MCF 10A (cell line): ENCODE measurements at regions of chr1 and their contacts with region 1.

Region 1: DNA sequence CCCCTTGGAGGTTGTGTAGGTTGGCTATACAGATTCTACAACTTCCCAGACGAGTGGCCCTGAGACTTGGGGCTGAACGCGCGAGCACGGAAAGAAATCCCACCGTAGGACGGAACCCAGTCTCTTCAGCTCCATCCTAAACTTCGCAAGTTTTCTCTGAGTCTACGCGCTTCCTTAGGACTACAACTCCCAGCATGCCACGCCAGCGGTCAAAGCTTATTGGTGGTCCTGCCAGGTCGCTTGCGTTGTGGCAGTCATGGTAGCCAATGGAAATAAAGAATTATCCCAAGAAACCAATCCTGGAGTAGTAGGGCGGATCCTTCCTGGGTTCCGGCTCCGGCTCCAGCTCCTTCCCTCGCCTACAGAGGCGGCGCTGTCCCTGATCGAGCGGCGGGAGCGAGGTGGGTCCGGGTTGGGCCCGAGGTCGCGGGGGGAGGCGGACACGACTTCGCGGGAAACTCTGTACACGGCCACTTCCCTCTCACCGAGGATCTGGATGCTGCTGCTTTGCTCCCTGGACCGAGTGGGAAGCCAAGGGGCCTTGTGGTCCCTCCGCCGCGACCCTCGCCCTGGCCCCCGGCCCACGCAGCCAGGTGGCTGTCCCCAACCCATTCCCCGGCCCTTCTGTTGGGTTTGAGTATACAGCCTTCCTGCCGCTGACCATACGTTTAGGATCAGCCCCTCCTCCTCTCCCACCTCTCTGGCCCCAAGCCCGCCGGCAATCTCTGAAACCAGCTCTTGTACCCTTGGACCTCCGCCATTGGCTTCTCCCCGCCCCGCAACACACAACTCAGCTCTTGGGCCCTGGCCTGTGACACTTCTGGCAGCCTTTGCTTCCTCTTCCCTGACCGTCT is at the start of gene ZNF691:
- DNase-seq: peak; percentile 97
- H3K4me3 Mint-ChIP-seq: peak within 1 kb of the TSS; percentile 98
- H3K27ac Mint-ChIP-seq: peak within 1 kb of the TSS; percentile 98
- H3K4me1 Mint-ChIP-seq: peaks cover 28% of the 10 kb centered on the region
- H3K27me3 Mint-ChIP-seq: no peaks in the 10 kb centered on the region
- CTCF ChIP-seq: peak; percentile 27
- total RNA-seq, gene ZNF691: 8.4 and 9.5 TPM in 2 replicates

Region 2: GRCh38 chr1:42703888-42704464 is 142.5 kb before region 1 on chr1:
- CTCF ChIA-PET with region 1: no interaction called
- POLR2A ChIA-PET with region 1: no interaction called
- intact Hi-C with region 1: no loop called
- DNase-seq: no peak
- H3K4me3 Mint-ChIP-seq: no peak overlapping the region
- H3K27ac Mint-ChIP-seq: no peak overlapping the region
- H3K4me1 Mint-ChIP-seq: peaks cover 11% of the 10 kb centered on the region
- H3K27me3 Mint-ChIP-seq: no peaks in the 10 kb centered on the region
- CTCF ChIP-seq: no peak

Region 3: DNA sequence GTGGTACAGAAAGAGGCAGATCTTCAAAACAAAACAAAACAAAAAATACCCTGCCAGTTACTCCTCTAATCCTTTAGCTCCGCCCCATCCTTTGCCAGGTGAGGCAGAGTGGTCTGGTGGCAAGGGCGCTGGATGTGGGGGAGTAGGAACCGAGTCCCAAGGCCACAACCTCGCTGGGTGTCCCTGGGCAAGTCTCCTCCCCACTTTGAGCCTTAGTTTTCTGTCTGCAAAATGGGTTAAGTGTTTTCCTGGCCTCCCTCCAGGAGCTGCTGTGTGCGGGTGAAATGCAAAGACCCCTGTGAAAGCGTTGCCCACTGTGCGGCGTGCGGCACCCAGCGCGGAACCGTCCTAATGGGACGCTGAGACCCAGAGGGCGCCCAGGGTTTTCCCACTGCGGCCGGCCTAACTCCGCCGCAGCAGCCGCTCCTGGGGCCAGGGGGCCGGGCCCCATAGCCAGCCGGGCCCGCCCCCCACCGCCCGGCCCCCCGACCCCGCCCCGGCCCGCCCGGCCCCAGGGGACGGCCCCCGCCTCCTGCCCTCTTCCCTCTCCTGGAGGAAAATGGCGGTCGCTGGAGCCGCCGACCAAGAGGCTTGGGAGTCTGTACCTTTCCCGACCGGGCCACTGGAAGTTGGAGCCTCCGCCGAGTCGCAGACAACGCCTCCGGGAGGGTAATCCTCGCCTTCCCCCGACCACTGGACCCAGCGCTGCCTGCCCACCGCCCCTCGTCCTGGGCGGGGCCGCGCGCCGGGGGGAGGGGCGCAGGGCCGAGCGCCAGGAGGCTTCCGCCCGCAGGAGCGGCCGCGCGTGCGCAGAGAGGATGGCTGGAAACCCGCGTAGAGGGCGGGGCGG is 29.7 kb before region 1 on chr1 and contains the starts of genes ERMAP and SVBP:
- CTCF ChIA-PET with region 1: interaction called, 6 read pairs
- POLR2A ChIA-PET with region 1: interaction called, 88 read pairs
- intact Hi-C with region 1: no loop called
- DNase-seq: peak; percentile 84
- H3K4me3 Mint-ChIP-seq: peak within 1 kb of the TSS; percentile 71
- H3K27ac Mint-ChIP-seq: peak within 1 kb of the TSS; percentile 74
- H3K4me1 Mint-ChIP-seq: peaks cover 21% of the 10 kb centered on the region
- H3K27me3 Mint-ChIP-seq: no peaks in the 10 kb centered on the region
- CTCF ChIP-seq: no peak
- total RNA-seq, gene ERMAP: 13.2 and 17.2 TPM in 2 replicates
- total RNA-seq, gene SVBP: 15.7 and 16.7 TPM in 2 replicates

Region 4: GRCh38 chr1:42833981-42834380 is 12.5 kb before region 1 on chr1:
- CTCF ChIA-PET with region 1: interaction called, 4 read pairs
- POLR2A ChIA-PET with region 1: interaction called, 29 read pairs
- intact Hi-C with region 1: no loop called
- DNase-seq: no peak
- H3K4me3 Mint-ChIP-seq: no peak overlapping the region
- H3K27ac Mint-ChIP-seq: no peak overlapping the region
- H3K4me1 Mint-ChIP-seq: no peaks in the 10 kb centered on the region
- H3K27me3 Mint-ChIP-seq: no peaks in the 10 kb centered on the region
- CTCF ChIP-seq: no peak

Region 5: DNA sequence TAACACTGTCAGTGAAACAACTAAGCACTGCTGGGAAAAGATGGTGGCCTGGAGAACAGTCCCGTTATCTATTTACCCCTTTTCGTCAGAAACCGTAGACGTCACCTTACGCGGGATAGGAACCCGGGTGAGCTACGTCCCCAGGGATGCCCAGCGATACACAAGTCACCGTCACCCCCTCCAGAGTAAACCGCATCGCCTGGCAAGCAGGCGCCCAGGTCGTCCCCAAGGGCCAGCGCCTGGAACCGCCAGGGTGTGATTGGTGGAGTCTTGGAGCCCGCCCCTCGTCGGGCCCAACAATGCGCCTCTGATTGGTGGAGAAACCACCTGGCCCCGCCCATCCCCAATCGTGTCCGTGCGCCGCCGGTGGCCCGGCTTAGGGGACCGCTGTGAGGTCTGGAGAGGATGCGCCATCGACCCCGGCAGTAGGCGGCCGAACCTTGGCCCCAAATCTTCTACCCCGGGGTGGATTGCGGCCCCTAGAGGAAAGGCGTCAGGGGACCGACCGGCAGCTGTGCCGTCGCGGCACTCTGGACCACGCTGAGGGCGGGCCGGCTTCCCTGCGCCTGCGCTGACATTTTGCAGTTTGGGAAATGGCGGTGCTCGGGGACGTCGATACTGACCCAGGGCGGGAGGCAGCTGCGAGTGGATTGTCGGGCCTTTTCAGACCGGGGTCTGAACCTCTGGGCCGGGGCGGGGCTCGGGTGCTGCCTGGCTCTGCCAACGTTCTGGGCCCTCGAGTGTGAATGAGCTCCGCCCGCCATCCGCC is 77.8 kb after region 1 on chr1:
- CTCF ChIA-PET with region 1: no interaction called
- POLR2A ChIA-PET with region 1: no interaction called
- intact Hi-C with region 1: no loop called
- DNase-seq: no peak
- H3K4me3 Mint-ChIP-seq: peak overlapping the region; percentile 54
- H3K27ac Mint-ChIP-seq: no peak overlapping the region
- H3K4me1 Mint-ChIP-seq: peaks cover 18% of the 10 kb centered on the region
- H3K27me3 Mint-ChIP-seq: no peaks in the 10 kb centered on the region
- CTCF ChIP-seq: no peak